CD14-positive monocyte (primary cell): ENCODE measurements at regions of chr18 and their contacts with region 1.

Region 1: DNA sequence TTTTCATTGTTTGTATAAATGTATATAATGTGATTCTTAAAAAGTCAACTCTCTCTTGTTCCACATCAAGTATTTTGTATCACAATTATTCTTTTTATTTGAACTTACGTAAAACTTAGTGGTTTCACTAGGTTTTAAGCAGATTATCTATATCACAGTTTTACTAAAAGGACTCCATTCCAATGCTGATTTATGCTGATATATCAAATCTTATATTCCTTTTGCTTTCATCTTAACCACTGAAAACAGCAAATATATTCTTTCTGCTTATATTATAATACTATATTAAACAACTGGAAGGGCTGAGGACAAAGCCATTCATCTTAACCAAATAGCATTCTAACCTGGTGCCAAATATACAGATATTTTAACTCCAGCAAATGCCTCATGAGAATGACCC is 24.2 kb downstream of the TRAPPC8 start:
- DNase-seq: no peak
- H3K4me3 ChIP-seq: no peak overlapping the region
- H3K4me3 Mint-ChIP-seq: no peak overlapping the region
- H3K27ac ChIP-seq: no peak overlapping the region
- H3K27ac Mint-ChIP-seq: peak overlapping the region in 1 of 7 donors; percentile 40
- H3K4me1 ChIP-seq: no peaks in the 10 kb centered on the region
- H3K4me1 Mint-ChIP-seq: no peaks in the 10 kb centered on the region
- H3K27me3 ChIP-seq: no peaks in the 10 kb centered on the region
- H3K27me3 Mint-ChIP-seq: no peaks in the 10 kb centered on the region
- CTCF ChIP-seq: no peak

Region 2: GRCh38 chr18:31857526-31858106 is 61.1 kb before region 1 on chr18:
- intact Hi-C with region 1: loop called in 1 of 2 experiments (anchors 10 kb)
- DNase-seq: no peak
- H3K4me3 ChIP-seq: no peak overlapping the region
- H3K4me3 Mint-ChIP-seq: no peak overlapping the region
- H3K27ac ChIP-seq: no peak overlapping the region
- H3K27ac Mint-ChIP-seq: peak overlapping the region in 3 of 7 donors; percentile 54 to 77 (median 71)
- H3K4me1 ChIP-seq: no peaks in the 10 kb centered on the region
- H3K4me1 Mint-ChIP-seq: no peaks in the 10 kb centered on the region
- H3K27me3 ChIP-seq: no peaks in the 10 kb centered on the region
- H3K27me3 Mint-ChIP-seq: no peaks in the 10 kb centered on the region
- CTCF ChIP-seq: no peak